ENCODE measurements at regions of chr7 and their contacts with region 1.

Region 1: GRCh38 chr7:135672560-135673359 is 10.4 kb downstream of the STMP1 start:
- DNase-seq: peak; percentile 66
- H3K4me3 Mint-ChIP-seq: no peak overlapping the region
- H3K27ac Mint-ChIP-seq: no peak overlapping the region
- H3K4me1 Mint-ChIP-seq: peaks cover 6% of the 10 kb centered on the region
- H3K27me3 Mint-ChIP-seq: no peaks in the 10 kb centered on the region

Region 2: DNA sequence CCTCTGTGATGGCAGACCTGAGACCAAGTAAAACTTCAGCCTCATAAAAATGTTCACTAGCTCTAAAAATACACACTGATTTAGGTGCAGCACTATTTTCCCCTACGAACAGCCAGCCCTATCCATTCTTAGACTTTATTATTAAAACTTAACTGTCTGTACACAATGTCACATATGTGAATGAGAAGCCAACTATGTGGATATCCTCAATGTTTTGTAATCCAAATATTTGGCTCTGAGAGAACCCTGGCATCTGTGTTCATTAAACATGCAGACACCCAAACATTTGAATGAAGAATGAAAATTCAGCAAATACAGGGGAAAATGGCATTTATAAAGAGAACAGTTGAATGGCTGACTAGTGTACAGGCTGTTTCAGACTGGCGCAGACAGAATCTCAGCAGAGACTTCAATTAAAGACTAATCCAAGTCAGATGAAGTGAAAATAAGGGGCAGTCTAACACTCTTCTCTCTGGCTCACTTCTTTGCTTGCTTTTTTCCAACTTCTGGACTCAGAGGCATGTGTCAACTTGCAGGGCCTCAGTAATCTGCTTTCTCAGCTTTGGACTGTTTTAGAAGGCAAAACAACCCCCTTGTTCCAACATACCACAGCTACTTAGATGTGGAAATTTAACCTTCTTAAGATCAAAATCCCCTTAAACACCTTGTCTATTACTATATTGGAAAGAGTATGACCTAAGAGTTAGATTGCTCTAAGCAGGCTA is 123.2 kb after region 1 on chr7:
- intact Hi-C with region 1: loop called (anchors 10 kb)
- DNase-seq: no peak
- H3K4me3 Mint-ChIP-seq: no peak overlapping the region
- H3K27ac Mint-ChIP-seq: no peak overlapping the region
- H3K4me1 Mint-ChIP-seq: no peaks in the 10 kb centered on the region
- H3K27me3 Mint-ChIP-seq: peaks cover 6% of the 10 kb centered on the region

Measured in activated CD4-positive, alpha-beta T cell treated with anti-CD3 and anti-CD28 coated beads, Interleukin-2, amount 10 ng/mL, durations not matched to agents 24 days and 14 days (primary cell).